ENCODE measurements at regions of chr14 and their contacts with region 1.

Region 1: DNA sequence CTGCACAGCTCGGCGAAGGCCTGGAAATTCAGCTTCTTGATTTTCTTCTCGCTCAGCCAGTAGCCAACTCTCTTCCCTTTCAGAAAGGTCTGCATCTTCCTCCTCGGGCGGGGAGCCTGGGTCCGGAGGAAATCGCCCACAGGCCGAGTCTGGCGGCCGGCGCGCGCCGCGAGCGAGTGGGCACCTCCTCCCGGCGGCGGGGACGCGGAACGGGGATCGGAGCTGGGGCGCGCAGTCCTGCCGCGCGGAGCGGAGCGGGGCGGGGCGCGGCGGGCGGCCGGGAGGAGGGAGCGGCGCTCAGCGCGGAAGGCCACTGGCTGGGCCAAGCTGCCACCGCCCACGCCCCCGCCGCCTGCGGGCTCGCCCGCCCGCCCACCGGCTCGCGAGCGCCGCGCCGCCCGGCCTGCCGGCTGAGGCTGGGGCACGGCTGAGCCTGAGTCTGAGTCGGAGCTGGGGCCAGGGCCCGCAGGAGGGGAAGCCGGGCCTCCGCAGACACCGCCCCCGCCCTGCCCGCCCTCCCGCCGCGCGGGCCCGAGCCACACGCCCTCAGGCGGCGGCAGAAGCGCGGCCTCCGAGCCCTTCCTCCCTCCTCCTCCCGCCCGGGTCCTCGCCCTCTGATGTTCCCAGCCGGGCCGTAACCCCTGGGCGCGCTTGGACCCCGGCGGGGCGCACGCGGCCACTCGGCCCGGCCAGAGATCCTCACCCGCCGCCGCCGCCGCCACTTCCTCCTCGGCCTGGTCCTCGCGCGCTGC is 480 bp downstream of the ITPK1 start:
- DNase-seq: peak; percentile 76 to 81 (median 76)
- H3K4me3 ChIP-seq: peak overlapping the region; percentile 47 to 82 (median 52)
- H3K4me3 Mint-ChIP-seq: peak overlapping the region; percentile 87 to 93
- H3K27ac ChIP-seq: peak overlapping the region; percentile 60 to 71
- H3K27ac Mint-ChIP-seq: peak overlapping the region; percentile 78 to 94 (median 90)
- H3K4me1 ChIP-seq: peaks cover 61 to 88% of the 10 kb centered on the region in 2 donors
- H3K4me1 Mint-ChIP-seq: peaks cover 66% of the 10 kb centered on the region
- H3K27me3 ChIP-seq: no peaks in the 10 kb centered on the region
- H3K27me3 Mint-ChIP-seq: peaks cover 0 to 3% (median 0%) of the 10 kb centered on the region in 3 donors
- CTCF ChIP-seq: peak; percentile 2

Region 2: DNA sequence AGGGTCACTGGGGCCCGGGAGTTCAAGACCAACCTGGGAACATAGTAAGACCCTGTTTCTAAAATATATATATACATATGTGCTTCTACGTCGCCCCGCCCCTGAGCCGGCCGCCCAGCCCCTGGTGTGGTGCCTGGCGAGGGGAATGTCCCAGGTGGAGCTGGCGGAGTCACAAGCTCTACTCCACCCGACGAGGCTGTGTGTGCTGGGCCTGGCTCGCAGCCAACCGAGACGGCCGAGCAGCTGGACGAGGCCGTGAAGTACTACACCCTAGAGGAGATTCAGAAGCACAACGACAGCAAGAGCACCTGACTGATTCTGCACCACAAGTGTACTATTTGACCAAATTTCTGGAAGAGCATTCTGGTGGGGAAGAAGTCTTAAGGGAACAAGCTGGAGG is 22.6 kb after region 1 on chr14:
- intact Hi-C with region 1: loop called in 1 of 2 experiments (anchors 2 kb)
- DNase-seq: no peak
- H3K4me3 ChIP-seq: no peak overlapping the region
- H3K4me3 Mint-ChIP-seq: no peak overlapping the region
- H3K27ac ChIP-seq: no peak overlapping the region
- H3K27ac Mint-ChIP-seq: peak overlapping the region in 1 of 7 donors; percentile 6
- H3K4me1 ChIP-seq: peaks cover 42 to 43% of the 10 kb centered on the region in 2 donors
- H3K4me1 Mint-ChIP-seq: peaks cover 39% of the 10 kb centered on the region
- H3K27me3 ChIP-seq: no peaks in the 10 kb centered on the region
- H3K27me3 Mint-ChIP-seq: peaks cover 0 to 3% (median 1%) of the 10 kb centered on the region in 3 donors
- CTCF ChIP-seq: no peak

Region 3: GRCh38 chr14:93173943-93174395 is 58.7 kb after region 1 on chr14:
- intact Hi-C with region 1: loop called in 1 of 2 experiments (anchors 5 kb)
- DNase-seq: no peak
- H3K4me3 ChIP-seq: no peak overlapping the region
- H3K4me3 Mint-ChIP-seq: peak overlapping the region in 1 of 2 donors; percentile 1
- H3K27ac ChIP-seq: no peak overlapping the region
- H3K27ac Mint-ChIP-seq: no peak overlapping the region
- H3K4me1 ChIP-seq: no peaks in the 10 kb centered on the region
- H3K4me1 Mint-ChIP-seq: peaks cover 2% of the 10 kb centered on the region
- H3K27me3 ChIP-seq: no peaks in the 10 kb centered on the region
- H3K27me3 Mint-ChIP-seq: peaks cover 0 to 4% (median 3%) of the 10 kb centered on the region in 3 donors
- CTCF ChIP-seq: no peak

Region 4: DNA sequence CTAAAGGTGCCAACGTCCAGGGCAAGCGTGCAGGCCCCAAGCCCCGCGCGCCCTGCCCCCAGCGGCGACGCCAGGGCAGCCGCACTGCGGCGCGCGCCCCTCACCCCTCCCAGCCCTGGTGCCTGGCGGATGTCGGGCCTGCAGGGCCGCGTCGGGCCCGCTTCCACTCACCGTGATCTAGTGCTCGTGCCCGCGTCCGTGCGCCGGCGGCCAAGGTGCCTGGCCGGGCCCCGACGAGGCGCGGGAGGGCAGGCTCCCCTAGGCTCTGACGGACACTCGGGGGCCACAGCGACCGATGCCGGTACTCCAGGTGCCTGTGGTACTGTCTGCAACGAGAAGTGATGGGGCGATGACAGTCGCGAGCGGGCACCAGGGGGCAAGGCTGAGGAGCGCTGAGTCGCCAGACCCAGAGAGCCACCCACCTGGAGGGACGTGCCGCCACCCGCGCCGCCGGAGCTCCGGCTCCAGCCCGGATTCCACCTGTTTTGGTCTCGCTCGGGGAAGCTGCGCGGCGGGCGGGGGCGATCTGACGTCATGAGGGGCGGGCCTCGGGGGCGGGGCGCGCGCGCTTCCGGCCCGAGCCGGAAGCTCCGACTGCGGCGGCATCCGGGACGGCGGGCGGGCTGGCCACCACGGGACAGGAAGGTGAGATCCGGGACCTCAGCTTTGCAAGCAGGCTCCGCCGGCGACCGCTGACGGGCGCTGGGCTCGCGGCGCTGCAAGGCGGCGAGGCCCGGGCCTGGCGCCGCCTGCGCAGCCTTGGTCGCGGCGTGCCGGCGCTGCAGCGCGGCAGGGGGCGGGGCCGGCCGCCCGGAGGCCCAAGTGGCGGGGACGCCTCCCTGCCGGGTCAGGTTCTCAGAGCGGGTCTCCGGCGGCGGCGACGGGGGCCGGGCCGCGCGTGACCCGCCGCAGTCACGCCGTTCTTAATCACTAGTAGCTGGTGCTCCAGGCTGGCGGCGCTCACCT is 69.4 kb after region 1 on chr14 and contains the starts of genes LYSET and MOAP1:
- intact Hi-C with region 1: loop called (anchors 5 to 10 kb)
- DNase-seq: peak; percentile 83 to 92 (median 87)
- H3K4me3 ChIP-seq: peak within 1 kb of the TSS; percentile 82 to 97 (median 86)
- H3K4me3 Mint-ChIP-seq: peak within 1 kb of the TSS; percentile 87 to 91
- H3K27ac ChIP-seq: peak within 1 kb of the TSS; percentile 84 to 100
- H3K27ac Mint-ChIP-seq: peak within 1 kb of the TSS; percentile 94 to 98 (median 96)
- H3K4me1 ChIP-seq: peaks cover 26 to 30% of the 10 kb centered on the region in 2 donors
- H3K4me1 Mint-ChIP-seq: peaks cover 31% of the 10 kb centered on the region
- H3K27me3 ChIP-seq: no peaks in the 10 kb centered on the region
- H3K27me3 Mint-ChIP-seq: no peaks in the 10 kb centered on the region
- CTCF ChIP-seq: peak; percentile 12
- polyA plus RNA-seq, gene LYSET: 10.8 to 43.3 (median 36.9) TPM
- polyA plus RNA-seq, gene MOAP1: 22.5 to 53.9 (median 22.6) TPM

Measured in CD14-positive monocyte (primary cell).